CD4-positive, alpha-beta memory T cell (primary cell): ENCODE measurements at regions of chr1 and their contacts with region 1.

Region 1: DNA sequence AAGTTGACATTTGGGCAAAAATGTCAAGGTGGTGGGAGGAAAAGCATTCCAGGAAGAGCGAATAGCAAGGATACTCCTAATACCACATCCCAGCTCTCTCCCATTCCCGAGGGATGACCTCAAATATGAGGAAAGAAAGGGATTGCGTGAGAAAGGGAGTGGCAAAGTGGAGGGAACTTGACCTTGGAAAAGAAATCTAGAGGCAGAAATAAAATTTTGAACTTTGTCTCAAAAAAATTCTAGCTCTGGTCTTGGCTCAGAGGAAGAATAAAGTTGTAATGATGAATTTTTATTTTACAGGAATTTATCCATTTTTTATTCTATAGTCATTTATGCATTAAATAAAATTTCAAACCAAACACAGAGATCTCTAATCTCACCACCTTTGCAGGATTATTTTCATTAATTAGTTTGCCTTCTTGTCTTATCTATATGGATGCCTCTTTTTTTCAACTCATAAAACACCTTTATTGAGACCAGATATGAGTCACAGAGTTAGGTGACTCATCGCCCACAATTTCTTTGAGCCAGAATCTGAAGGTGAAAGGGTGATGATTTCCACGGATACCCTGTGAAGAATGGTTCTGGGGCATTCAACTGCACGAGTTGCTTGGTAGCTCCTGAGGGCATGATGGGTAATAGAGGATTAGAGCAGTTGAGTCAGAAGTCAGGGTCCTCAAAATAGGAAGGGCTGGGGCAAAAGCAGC is 128.0 kb downstream of the TBX19 start:
- DNase-seq: peak; percentile 40 to 86 (median 49)
- H3K4me3 ChIP-seq: no peak overlapping the region
- H3K4me3 Mint-ChIP-seq: peak overlapping the region; percentile 40 to 85 (median 70)
- H3K27ac ChIP-seq: peak overlapping the region; percentile 17
- H3K27ac Mint-ChIP-seq: peak overlapping the region; percentile 85 to 95 (median 89)
- H3K4me1 ChIP-seq: peaks cover 41% of the 10 kb centered on the region
- H3K4me1 Mint-ChIP-seq: peaks cover 35 to 58% (median 44%) of the 10 kb centered on the region in 4 donors
- H3K27me3 ChIP-seq: no peaks in the 10 kb centered on the region
- H3K27me3 Mint-ChIP-seq: no peaks in the 10 kb centered on the region

Region 2: DNA sequence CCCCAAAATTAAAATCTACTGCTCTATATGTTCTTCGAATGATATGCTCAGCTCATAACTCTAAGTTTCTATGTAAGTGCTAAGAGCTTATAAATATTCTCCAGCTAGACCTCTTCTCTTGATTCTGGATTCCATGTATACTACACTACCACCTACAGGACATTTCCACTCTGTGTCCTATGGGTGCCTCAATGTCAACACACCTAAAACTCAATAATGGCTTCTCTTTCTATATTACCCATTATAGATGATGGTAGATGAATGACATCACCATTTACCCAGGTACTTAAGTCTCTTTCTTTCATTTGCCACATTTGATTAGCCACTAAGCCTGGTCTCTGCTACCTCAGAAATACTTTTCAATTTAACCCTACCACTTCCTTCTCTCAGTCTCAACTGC is 86.7 kb before region 1 on chr1:
- CTCF ChIA-PET with region 1: no interaction called
- POLR2A ChIA-PET with region 1: no interaction called
- intact Hi-C with region 1: no loop called
- DNase-seq: no peak
- H3K4me3 ChIP-seq: no peak overlapping the region
- H3K4me3 Mint-ChIP-seq: no peak overlapping the region
- H3K27ac ChIP-seq: no peak overlapping the region
- H3K27ac Mint-ChIP-seq: no peak overlapping the region
- H3K4me1 ChIP-seq: no peaks in the 10 kb centered on the region
- H3K4me1 Mint-ChIP-seq: no peaks in the 10 kb centered on the region
- H3K27me3 ChIP-seq: no peaks in the 10 kb centered on the region
- H3K27me3 Mint-ChIP-seq: no peaks in the 10 kb centered on the region

Region 3: GRCh38 chr1:168360151-168361021 is 48.3 kb before region 1 on chr1:
- CTCF ChIA-PET with region 1: interaction called, 3 read pairs
- POLR2A ChIA-PET with region 1: interaction called, 11 read pairs
- intact Hi-C with region 1: no loop called
- DNase-seq: peak in 1 of 5 donors; percentile 55
- H3K4me3 ChIP-seq: no peak overlapping the region
- H3K4me3 Mint-ChIP-seq: peak overlapping the region in 3 of 8 donors; percentile 25 to 48 (median 36)
- H3K27ac ChIP-seq: no peak overlapping the region
- H3K27ac Mint-ChIP-seq: peak overlapping the region in 5 of 7 donors; percentile 79 to 100 (median 90)
- H3K4me1 ChIP-seq: peaks cover 49% of the 10 kb centered on the region
- H3K4me1 Mint-ChIP-seq: peaks cover 27 to 55% (median 44%) of the 10 kb centered on the region in 4 donors
- H3K27me3 ChIP-seq: no peaks in the 10 kb centered on the region
- H3K27me3 Mint-ChIP-seq: no peaks in the 10 kb centered on the region

Region 4: DNA sequence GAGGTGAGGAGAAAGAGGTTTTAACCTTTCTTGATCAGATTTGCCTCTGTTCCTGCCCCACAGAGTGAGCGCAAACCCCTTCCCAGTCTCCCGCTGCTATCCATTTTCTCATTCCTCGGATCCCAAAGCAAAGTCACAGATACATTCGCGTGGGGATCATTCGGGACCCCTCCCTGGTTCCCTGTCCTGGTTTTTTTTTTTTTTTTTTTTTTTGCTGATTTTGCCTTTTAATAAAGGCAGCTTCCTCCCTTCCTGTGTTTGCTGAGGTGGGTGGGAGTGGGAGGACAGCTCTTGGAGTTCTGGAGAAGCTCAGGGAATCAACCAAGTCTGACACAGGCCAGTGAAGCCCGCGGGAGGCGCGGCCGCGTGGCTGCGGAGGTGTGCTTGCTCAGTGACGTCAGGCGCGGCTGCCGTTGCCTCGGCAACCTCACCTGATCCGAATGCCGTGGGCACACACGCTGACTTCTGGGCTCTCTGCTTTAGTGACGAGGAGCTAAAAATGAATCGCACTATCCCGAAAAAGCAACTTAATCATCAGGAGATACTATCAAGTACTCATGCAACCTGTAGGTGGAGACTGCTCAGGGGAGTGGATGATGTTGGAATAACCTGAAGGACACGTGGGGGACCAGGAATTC is 21.6 kb before region 1 on chr1:
- CTCF ChIA-PET with region 1: no interaction called
- POLR2A ChIA-PET with region 1: interaction called, 14 read pairs
- intact Hi-C with region 1: no loop called
- DNase-seq: peak; percentile 73 to 85 (median 77)
- H3K4me3 ChIP-seq: peak overlapping the region in 1 of 2 donors; percentile 41
- H3K4me3 Mint-ChIP-seq: peak overlapping the region; percentile 59 to 87 (median 71)
- H3K27ac ChIP-seq: no peak overlapping the region
- H3K27ac Mint-ChIP-seq: peak overlapping the region; percentile 84 to 98 (median 94)
- H3K4me1 ChIP-seq: peaks cover 18% of the 10 kb centered on the region
- H3K4me1 Mint-ChIP-seq: peaks cover 11 to 35% (median 25%) of the 10 kb centered on the region in 4 donors
- H3K27me3 ChIP-seq: no peaks in the 10 kb centered on the region
- H3K27me3 Mint-ChIP-seq: peaks cover 0 to 2% of the 10 kb centered on the region in 2 donors

Region 5: DNA sequence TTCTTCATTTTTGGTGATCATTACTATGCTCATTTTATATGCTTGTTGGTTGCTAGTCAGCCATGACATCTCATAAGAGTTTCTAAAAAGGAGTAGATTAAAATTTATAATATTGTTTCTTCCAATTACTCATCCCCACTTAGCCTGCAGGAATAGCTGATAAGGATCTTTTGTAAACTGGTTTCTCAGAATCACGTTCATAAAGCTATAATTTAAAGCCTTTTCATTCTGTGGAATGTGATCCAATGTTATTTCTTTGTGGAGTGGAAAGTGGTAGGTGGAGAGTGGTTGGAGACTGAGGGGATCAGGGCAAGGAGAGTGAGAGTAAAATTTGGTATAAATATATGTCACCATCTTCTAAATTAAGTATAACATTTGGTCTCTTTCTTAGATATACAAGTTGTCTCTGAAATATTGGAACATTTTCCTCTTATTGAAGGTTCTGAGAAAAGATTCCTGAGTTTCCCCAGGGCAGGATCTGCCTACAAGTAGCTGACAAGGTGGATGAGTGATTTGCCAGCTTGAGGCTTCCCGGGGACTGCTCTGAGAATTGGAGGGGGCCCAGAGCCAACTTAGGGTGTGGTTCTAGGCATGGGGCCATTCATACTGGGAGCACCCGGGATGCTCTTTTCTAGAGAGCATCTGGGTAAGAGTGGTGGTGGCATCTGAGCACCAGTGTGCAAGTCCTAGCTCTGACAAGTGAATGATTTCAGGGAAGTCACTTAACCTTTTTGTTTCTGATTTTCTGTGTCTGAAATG is 11.6 kb before region 1 on chr1:
- CTCF ChIA-PET with region 1: interaction called, 4 read pairs
- POLR2A ChIA-PET with region 1: interaction called, 16 read pairs
- intact Hi-C with region 1: no loop called
- DNase-seq: no peak
- H3K4me3 ChIP-seq: no peak overlapping the region
- H3K4me3 Mint-ChIP-seq: no peak overlapping the region
- H3K27ac ChIP-seq: no peak overlapping the region
- H3K27ac Mint-ChIP-seq: no peak overlapping the region
- H3K4me1 ChIP-seq: peaks cover 21% of the 10 kb centered on the region
- H3K4me1 Mint-ChIP-seq: peaks cover 15 to 29% (median 20%) of the 10 kb centered on the region in 4 donors
- H3K27me3 ChIP-seq: no peaks in the 10 kb centered on the region
- H3K27me3 Mint-ChIP-seq: peaks cover 4 to 5% of the 10 kb centered on the region in 2 donors

Region 6: DNA sequence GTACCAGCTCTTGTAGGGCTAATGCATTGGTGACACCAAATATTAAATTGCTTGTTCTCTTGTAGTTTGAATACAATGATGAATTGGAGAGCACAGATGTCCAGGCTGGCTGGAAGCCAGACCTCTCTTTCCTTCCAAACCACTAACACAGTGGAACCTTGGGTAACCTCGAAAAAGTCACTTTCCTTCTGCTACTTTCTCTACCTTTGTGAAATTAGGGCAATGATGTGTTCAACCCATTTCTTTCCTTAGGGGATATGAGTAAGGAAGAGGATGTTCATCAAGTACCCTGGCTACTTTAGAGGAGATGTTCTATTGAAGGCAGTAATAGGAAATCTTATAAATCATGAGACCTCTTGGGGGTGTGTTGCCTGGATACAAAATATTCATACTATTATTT is 79.4 kb after region 1 on chr1:
- CTCF ChIA-PET with region 1: no interaction called
- POLR2A ChIA-PET with region 1: no interaction called
- intact Hi-C with region 1: no loop called
- DNase-seq: no peak
- H3K4me3 ChIP-seq: no peak overlapping the region
- H3K4me3 Mint-ChIP-seq: peak overlapping the region in 4 of 8 donors; percentile 13 to 36 (median 26)
- H3K27ac ChIP-seq: no peak overlapping the region
- H3K27ac Mint-ChIP-seq: peak overlapping the region in 1 of 7 donors; percentile 22
- H3K4me1 ChIP-seq: peaks cover 29% of the 10 kb centered on the region
- H3K4me1 Mint-ChIP-seq: peaks cover 25 to 51% (median 42%) of the 10 kb centered on the region in 4 donors
- H3K27me3 ChIP-seq: no peaks in the 10 kb centered on the region
- H3K27me3 Mint-ChIP-seq: no peaks in the 10 kb centered on the region